ENCODE measurements at regions of chr12 and their contacts with region 1.

Region 1: DNA sequence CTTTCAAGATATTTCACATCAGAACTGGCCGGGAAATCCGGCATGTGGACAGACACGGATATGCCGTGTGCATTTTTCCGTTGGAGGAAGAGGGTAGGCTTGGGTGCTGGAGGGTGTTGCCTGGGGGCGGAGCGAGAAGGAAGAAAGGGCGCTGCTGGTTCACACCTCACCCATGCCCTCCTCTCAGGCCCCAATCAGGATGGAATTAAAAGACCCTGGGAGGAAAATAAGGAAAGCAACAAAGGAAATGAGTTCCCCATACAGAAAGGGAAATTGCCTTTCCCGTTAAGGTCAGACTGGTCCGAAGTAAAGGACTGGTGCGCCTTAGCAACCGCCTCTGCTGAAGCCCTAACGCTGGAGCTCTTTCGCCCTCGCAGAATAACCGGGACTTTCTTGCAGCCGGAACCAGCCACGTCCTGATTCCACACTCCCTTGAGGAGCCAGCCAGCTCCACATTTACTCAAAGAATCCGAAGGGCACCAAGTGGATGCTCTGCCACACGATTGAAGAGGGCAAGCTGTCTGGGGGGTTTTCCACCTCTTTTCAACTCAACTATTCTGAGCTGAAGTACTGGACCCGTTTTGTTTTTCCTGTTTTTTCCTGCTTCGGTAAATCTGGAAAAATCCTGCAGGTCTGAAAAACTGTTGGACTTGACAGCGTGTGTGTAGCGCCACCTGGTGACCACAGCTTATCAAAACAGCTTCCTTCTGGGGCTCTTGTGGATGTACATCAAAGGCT is 37.7 kb upstream of the BCL2L14 start:
- DNase-seq: peak; percentile 65 to 83
- H3K4me3 ChIP-seq: peak overlapping the region; percentile 47 to 61
- H3K27ac ChIP-seq: peak overlapping the region; percentile 77 to 82
- H3K4me1 ChIP-seq: peaks cover 0 to 12% (median 8%) of the 10 kb centered on the region in 4 donors
- H3K27me3 ChIP-seq: no peaks in the 10 kb centered on the region
- CTCF ChIP-seq: peak; percentile 80 to 93

Region 2: GRCh38 chr12:11553871-11554533 is 479.0 kb before region 1 on chr12:
- intact Hi-C with region 1: loop called (anchors 10 kb)
- DNase-seq: peak in 1 of 2 donors; percentile 50
- H3K4me3 ChIP-seq: peak overlapping the region; percentile 7 to 50
- H3K27ac ChIP-seq: peak overlapping the region; percentile 43 to 89
- H3K4me1 ChIP-seq: peaks cover 0 to 21% (median 11%) of the 10 kb centered on the region in 4 donors
- H3K27me3 ChIP-seq: no peaks in the 10 kb centered on the region
- CTCF ChIP-seq: peak; percentile 58 to 60

Region 3: GRCh38 chr12:11581179-11581755 is 451.8 kb before region 1 on chr12:
- intact Hi-C with region 1: loop called (anchors 2 kb)
- DNase-seq: peak; percentile 60 to 67
- H3K4me3 ChIP-seq: no peak overlapping the region
- H3K27ac ChIP-seq: peak overlapping the region; percentile 70 to 73
- H3K4me1 ChIP-seq: peaks cover 0 to 49% (median 30%) of the 10 kb centered on the region in 4 donors
- H3K27me3 ChIP-seq: no peaks in the 10 kb centered on the region
- CTCF ChIP-seq: peak; percentile 53 to 73